Calu3 (cell line): ENCODE measurements at regions of chr5 and their contacts with region 1.

Region 1: GRCh38 chr5:82351754-82352145 is 73.6 kb upstream of the RPS23 start:
- DNase-seq: peak; percentile 29
- H3K4me3 Mint-ChIP-seq: no peak overlapping the region
- H3K27ac Mint-ChIP-seq: peak overlapping the region; percentile 8
- H3K4me1 Mint-ChIP-seq: peaks cover 22% of the 10 kb centered on the region
- H3K27me3 Mint-ChIP-seq: no peaks in the 10 kb centered on the region
- CTCF ChIP-seq: peak; percentile 54

Region 2: GRCh38 chr5:81898403-81898802 is 453.3 kb before region 1 on chr5:
- CTCF ChIA-PET with region 1: no interaction called
- intact Hi-C with region 1: no loop called
- DNase-seq: no peak
- H3K4me3 Mint-ChIP-seq: no peak overlapping the region
- H3K27ac Mint-ChIP-seq: no peak overlapping the region
- H3K4me1 Mint-ChIP-seq: no peaks in the 10 kb centered on the region
- H3K27me3 Mint-ChIP-seq: no peaks in the 10 kb centered on the region
- CTCF ChIP-seq: no peak

Region 3: DNA sequence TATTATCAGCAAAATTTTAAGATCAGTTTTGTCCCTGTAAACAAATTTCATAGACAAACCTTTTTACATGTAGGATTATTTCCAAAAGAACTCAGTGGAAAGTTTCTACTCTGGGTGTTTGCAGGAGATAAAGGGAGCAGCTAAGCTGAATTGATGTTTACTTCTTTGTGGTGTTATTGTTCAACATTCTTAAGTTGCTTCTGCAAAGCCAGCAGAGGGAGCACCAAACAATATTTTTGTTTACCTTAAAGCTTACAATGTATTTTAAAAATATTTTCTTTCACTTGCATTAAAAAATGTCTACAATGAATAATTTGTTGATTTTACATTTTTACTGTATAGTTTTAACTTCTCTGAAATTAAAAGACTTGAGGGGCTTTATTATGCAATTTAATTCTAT is 244.5 kb before region 1 on chr5:
- CTCF ChIA-PET with region 1: no interaction called
- intact Hi-C with region 1: no loop called
- DNase-seq: peak; percentile 11
- H3K4me3 Mint-ChIP-seq: no peak overlapping the region
- H3K27ac Mint-ChIP-seq: no peak overlapping the region
- H3K4me1 Mint-ChIP-seq: no peaks in the 10 kb centered on the region
- H3K27me3 Mint-ChIP-seq: no peaks in the 10 kb centered on the region
- CTCF ChIP-seq: peak; percentile 54

Region 4: DNA sequence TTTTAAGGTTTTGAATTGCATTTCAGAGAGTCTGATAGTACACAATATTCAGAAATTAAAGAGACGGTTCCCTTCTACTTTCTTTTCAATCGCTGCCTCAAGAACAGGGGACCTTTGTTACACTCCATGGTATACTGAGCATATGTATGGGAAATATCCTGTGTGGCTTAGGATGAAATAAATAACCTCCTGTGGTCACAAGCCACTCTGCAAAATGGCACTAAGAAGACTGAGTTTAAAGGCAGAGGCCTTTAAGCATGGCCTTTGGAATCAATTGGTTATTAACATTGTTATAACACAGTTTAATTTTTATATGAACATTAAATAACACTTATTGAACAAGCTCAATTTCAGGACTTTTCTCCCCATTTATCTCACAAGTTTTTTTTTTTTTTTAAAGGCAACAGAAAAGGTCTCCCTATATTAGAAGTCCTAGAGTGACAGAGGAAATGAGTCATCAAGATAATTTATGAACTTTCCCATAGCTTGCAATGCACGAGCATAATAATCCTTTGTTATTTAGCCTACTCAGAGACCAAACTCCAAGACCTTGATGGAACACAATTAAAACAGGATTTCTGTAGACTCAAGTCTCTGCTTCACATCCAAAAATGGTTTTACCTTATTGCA is 383.5 kb after region 1 on chr5:
- CTCF ChIA-PET with region 1: no interaction called
- intact Hi-C with region 1: loop called (anchors 10 kb)
- DNase-seq: peak; percentile 10
- H3K4me3 Mint-ChIP-seq: no peak overlapping the region
- H3K27ac Mint-ChIP-seq: peak overlapping the region; percentile 65
- H3K4me1 Mint-ChIP-seq: peaks cover 47% of the 10 kb centered on the region
- H3K27me3 Mint-ChIP-seq: no peaks in the 10 kb centered on the region
- CTCF ChIP-seq: no peak

Region 5: GRCh38 chr5:82885627-82886389 is 534.1 kb after region 1 on chr5:
- CTCF ChIA-PET with region 1: no interaction called
- intact Hi-C with region 1: loop called (anchors 10 kb)
- DNase-seq: peak; percentile 46
- H3K4me3 Mint-ChIP-seq: peak overlapping the region; percentile 47
- H3K27ac Mint-ChIP-seq: peak overlapping the region; percentile 18
- H3K4me1 Mint-ChIP-seq: peaks cover 29% of the 10 kb centered on the region
- H3K27me3 Mint-ChIP-seq: no peaks in the 10 kb centered on the region
- CTCF ChIP-seq: no peak

Region 6: DNA sequence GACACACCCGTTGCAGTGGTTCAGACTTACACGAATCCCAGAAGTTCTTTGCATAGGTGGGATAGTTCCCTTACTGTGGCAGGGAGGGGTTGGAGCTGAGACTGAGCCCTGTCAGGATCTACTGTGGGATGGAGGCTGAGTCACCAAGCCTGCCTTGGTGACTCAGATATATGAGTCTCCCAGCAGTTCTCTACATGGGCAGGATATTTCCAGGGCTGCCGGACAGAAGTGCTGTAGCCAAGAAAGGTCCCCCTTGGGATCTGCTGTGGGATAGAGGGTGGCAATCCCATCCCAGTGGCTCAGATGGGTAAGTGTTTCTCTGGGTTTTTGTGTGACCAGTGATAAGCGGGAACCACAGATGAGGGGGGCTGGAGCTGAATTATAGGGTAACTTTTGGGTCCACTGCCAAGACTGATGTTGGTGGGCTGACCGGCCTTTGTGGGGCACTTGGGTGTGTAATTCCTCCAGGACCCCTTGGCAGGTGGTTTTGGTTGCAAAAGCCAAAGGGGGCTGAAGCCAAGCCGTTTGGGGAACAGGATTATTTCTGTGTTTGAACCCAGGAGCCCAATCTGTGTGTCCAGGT is 744.3 kb after region 1 on chr5:
- CTCF ChIA-PET with region 1: no interaction called
- intact Hi-C with region 1: loop called (anchors 10 kb)
- DNase-seq: peak; percentile 55
- H3K4me3 Mint-ChIP-seq: peak overlapping the region; percentile 76
- H3K27ac Mint-ChIP-seq: peak overlapping the region; percentile 76
- H3K4me1 Mint-ChIP-seq: peaks cover 34% of the 10 kb centered on the region
- H3K27me3 Mint-ChIP-seq: no peaks in the 10 kb centered on the region
- CTCF ChIP-seq: no peak

Region 7: DNA sequence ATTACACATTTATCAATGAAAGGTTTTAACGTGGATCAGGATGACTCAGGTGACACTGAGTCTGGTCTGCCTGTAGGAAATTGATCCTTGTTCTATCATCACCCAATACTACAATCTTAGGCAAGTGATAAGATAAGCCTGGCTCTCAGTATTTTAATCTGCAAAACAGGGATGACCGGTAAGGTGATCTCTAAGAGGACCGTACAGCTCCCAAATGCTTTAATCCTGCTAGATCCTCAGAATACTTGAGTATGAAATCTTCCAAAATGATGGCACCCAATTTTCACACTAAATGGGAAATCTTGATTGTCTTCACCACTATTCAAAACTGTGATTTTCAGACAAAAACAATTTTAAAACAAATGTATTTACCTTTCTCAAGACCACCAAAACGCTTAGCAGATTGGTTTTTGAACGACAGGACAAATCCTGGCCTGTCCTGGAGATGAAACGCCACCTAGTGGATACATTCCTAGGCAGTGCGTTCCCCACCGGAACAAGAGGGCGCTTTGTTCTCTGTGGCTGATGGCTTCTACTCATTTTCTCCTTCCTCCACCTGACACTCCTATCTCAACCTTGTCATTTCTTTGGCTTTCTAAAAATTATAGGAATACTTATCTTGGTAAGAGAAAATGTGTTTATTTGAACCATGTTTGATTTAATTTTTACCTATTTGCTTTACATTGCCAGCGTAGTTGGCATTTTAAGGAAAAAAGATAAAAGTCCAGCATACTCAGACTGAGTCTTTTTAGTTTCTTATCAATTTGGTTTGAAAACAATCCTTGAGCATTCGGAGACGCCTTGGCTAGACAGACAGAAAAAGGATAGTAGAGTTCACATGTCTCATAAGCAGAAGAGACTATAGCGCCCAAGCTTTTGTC is 1078.6 kb after region 1 on chr5:
- CTCF ChIA-PET with region 1: no interaction called
- intact Hi-C with region 1: loop called (anchors 2 kb)
- DNase-seq: peak; percentile 81
- H3K4me3 Mint-ChIP-seq: no peak overlapping the region
- H3K27ac Mint-ChIP-seq: no peak overlapping the region
- H3K4me1 Mint-ChIP-seq: no peaks in the 10 kb centered on the region
- H3K27me3 Mint-ChIP-seq: no peaks in the 10 kb centered on the region
- CTCF ChIP-seq: peak; percentile 89

Region 8: DNA sequence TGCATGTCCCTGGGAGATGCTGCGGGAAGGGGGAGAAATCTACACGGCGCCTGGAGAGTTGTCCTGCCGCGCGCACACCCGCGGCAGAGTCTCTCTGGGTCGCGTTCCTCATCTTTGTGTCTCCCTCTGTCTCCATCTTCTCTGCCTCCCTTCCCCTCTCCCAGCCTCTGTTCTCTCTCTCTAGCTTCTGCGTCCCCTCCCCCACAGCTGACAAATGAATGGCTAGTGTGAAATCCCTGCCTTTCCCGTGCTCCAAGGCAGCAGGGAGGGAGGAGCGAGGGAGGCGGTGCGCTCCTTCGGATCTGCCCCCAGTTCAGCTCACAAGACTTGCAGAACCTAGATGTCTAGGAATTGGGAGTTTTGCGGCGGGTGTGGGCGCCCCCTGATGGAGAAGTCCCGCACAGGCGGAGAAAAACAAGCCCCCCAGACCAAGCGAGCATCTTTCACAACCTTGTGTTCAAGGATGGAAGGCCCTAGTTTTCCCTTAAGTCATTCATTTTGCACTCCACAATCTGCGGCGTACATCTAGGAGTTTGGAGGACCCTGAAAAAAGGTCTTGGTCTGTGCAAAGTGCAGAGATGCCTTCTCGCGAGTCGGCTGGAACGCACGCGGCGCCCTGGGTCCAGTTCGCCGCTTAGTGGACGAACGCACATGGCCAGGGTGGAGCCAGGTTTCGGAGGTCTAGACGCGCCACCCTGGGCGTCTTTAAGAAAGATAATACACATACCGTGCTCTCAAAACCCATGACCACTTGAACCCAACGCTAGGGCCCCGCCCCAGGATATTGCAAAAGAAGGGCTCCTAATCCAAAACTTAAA is 1121.8 kb after region 1 on chr5:
- CTCF ChIA-PET with region 1: no interaction called
- intact Hi-C with region 1: loop called (anchors 5 kb)
- DNase-seq: peak; percentile 94
- H3K4me3 Mint-ChIP-seq: peak overlapping the region; percentile 77
- H3K27ac Mint-ChIP-seq: peak overlapping the region; percentile 84
- H3K4me1 Mint-ChIP-seq: peaks cover 49% of the 10 kb centered on the region
- H3K27me3 Mint-ChIP-seq: peaks cover 13% of the 10 kb centered on the region
- CTCF ChIP-seq: peak; percentile 97